ENCODE measurements at regions of chr17 and their contacts with region 1.

Region 1: DNA sequence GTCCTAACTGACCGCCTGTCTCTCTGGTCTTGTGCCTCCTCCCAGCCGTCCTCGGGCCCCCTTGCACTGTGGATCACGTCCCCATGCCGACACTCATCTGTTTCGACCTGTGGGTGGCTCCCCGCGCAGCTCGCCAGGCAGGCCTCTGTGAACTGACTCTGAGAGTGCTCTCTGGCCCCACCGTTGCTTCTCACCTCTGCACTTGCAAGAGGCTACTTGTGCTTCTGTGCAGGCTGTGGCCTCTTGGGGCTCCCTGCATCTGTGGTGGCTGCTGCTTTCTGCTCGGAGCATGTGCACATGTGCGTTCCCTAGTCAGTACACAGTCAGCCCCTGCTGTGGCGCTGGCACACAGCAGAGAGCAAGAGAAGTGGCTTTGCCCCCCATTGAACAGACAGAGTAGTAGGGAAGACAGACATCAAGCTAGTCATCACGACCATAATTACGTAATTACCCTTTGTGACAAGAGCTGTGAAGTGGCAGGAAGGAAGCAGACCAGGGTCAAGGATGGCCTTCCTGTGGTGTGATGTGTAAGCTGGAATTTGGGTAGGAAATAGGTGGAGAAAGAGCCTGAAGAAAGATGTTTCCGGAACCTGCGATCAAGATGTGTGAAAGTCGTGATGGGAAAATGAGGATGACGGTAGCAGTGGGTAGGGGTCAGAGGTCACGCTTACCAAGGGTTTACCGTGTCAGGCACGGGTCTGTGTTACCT is 256.0 kb upstream of the CACNG5 start:
- DNase-seq: no peak
- H3K4me3 ChIP-seq: no peak overlapping the region
- H3K27ac ChIP-seq: peak overlapping the region in 4 of 5 donors; percentile 42 to 77 (median 72)
- H3K4me1 ChIP-seq: peaks cover 0 to 51% (median 28%) of the 10 kb centered on the region in 4 donors
- H3K27me3 ChIP-seq: no peaks in the 10 kb centered on the region
- CTCF ChIP-seq: no peak
- EP300 ChIP-seq: no peak
- POLR2A ChIP-seq: no peak

Region 2: DNA sequence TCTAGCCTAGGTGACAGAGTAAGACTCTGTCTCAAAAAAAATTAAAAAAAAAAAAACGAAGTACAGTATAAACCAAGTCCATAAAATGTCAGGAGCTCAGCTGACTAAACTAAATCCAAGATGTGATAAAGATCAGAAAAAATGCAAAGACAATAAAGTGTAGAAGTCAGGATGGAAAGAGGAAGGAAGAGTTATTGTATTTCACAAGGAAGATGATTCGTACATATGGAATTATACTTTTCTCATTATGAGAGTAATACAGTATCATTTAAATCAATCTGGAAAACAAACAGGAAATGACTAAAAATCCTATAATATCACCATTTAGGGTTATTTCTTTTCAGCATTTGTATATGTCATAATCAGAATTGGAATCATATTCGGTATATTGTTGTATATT is 338.3 kb before region 1 on chr17:
- intact Hi-C with region 1: no loop called
- DNase-seq: no peak
- H3K4me3 ChIP-seq: no peak overlapping the region
- H3K27ac ChIP-seq: no peak overlapping the region
- H3K4me1 ChIP-seq: no peaks in the 10 kb centered on the region
- H3K27me3 ChIP-seq: no peaks in the 10 kb centered on the region
- CTCF ChIP-seq: no peak
- EP300 ChIP-seq: no peak
- POLR2A ChIP-seq: no peak

Region 3: GRCh38 chr17:66268247-66268927 is 310.5 kb before region 1 on chr17:
- intact Hi-C with region 1: loop called (anchors 10 kb)
- DNase-seq: peak in 1 of 2 donors; percentile 60
- H3K4me3 ChIP-seq: no peak overlapping the region
- H3K27ac ChIP-seq: no peak overlapping the region
- H3K4me1 ChIP-seq: peaks cover 0 to 8% (median 3%) of the 10 kb centered on the region in 4 donors
- H3K27me3 ChIP-seq: no peaks in the 10 kb centered on the region
- CTCF ChIP-seq: no peak
- EP300 ChIP-seq: no peak
- POLR2A ChIP-seq: no peak